ENCODE measurements at regions of chr19 and their contacts with region 1.

Region 1: GRCh38 chr19:1266116-1266915 is 2.8 kb upstream of the CIRBP start:
- DNase-seq: peak; percentile 96
- ATAC-seq: peak; percentile 55

Region 2: GRCh38 chr19:1221141-1221903 is 45.0 kb before region 1 on chr19:
- intact Hi-C with region 1: loop called (anchors 2 kb)
- DNase-seq: peak; percentile 84
- ATAC-seq: peak; percentile 73

Region 3: DNA sequence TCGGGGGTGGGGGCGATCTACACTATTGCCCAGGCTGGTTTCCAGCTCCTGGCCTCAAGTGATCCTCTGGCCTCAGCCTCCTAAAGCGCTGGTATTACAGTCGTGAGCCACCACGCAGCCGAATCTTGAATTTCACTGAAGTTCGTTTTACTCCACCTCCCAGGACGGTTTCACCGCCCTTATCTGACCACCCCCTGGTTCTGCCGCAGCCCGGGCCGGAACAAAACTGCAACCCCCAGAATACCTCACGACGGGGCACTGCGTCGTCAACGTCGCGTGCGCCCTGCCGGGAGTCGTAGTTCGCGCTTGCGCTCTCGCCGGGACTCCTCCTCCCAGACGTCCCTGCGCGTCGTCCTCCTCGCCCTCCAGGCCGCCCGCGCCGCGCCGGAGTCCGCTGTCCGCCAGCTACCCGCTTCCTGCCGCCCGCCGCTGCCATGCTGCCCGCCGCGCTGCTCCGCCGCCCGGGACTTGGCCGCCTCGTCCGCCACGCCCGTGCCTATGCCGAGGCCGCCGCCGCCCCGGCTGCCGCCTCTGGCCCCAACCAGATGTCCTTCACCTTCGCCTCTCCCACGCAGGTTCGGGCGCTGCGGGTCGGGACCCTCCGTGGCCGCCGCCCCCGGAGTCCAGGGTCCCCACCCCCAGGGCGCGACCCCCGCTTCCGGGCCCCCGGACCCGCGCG is 24.8 kb before region 1 on chr19 and contains the start of gene ATP5F1D:
- intact Hi-C with region 1: loop called (anchors 1 kb)
- DNase-seq: peak; percentile 97
- ATAC-seq: peak; percentile 64
- total RNA-seq, gene ATP5F1D: 656 TPM

Region 4: GRCh38 chr19:1249298-1249989 is 16.9 kb before region 1 on chr19:
- intact Hi-C with region 1: loop called (anchors 1 kb)
- DNase-seq: peak; percentile 98
- ATAC-seq: peak; percentile 17